ENCODE measurements at regions of chr14 and their contacts with region 1.

Region 1: DNA sequence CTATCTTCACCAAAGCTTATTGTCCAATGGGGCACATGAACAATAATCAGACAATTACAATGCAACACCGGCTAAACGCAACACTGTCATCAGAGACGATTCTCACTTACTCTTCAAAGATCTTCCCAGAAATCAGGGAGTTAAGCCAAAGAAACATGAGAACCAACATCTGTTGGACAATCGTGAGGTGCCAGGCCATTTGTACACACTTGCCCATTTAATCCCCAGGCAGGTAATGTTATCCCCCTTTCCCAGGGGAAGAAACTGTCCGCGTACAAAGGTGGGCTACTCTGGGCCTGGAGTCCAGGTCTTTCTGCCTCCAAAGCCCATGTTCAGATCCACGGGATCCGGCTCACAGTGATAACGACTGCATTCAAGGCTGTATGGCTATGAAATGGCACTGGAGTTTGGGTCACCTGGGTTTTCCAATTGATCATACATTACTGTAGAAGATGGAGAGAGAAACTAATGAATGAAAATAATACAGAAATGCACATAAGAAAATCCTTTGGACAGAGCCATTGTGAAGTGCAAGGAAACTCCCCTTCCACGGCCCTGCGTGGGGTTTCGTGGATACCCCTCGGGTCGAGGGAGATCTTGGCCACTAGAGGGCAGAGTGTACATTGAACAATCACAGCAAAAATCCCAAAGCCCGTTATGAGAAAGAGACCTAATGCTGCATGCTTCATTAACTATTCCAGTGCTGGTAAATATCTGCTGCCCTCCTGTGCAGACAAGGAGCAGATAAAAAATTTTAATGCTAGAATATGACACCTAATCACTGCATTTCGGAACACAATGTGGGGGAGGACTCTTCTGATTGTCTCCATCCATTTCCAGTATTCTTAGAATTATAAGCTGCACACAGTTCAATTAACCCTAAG is 111.4 kb downstream of the EGLN3 start:
- DNase-seq: peak; percentile 55
- ATAC-seq: peak; percentile 66 to 73

Region 2: DNA sequence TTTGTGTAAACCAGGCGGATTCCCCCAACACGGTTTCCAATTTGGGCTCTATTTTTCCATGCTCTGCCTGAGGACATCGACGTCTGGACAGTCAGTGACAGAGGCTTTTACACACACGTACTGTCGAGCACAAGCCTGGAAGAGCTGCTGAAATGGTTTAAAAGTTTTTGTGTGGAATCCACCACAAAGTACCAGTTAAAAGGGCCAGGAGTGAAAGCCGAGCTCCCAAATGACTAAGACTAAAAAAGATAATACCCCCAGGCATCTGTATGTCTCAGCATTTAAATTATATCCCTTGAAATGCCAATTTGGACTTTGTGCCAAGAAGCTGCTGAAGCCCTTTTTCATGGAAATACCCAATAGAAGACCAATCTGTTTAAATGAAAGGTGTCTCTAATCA is 61.8 kb before region 1 on chr14:
- intact Hi-C with region 1: no loop called
- DNase-seq: no peak
- ATAC-seq: no peak

Region 3: DNA sequence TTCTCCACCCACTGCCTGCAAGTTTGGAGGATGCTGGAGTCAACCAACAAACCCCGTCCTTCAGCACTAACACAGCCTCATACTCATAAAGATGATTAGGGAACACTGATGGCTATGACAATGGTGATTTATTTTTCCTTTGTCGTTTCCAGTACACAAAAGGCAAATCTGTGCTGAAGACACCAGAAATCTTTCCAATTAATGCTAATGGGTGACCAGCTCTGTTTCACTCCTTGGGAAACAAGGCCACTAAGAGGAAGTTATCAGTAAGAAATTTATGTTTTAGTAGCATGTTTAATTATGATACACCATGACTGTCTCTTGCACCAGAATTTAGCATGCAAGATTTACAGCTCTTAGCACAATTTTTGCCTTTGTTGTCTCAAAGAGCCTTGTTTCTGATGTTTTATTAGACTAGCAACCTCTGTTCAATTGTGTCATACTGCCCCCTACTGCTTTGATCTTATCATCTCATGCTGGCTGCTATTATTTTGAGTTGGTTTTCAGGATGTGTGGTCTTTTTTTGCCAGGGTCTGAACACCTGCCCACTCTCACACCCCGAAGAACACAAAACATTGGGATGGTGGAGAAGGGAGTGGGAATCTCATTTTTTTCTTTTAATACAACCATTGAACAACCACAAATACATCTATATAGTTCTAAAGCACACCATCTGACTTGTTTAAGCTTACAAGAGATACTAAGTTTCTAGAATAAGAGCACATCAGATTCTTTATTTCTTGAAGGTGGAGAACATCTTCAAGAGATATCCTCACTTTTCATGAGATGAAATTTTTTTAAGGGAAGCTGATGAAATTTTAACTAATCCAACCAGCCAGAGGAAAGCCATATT is 461.7 kb after region 1 on chr14:
- intact Hi-C with region 1: loop called (anchors 2 to 10 kb)
- DNase-seq: no peak
- ATAC-seq: peak in 1 of 2 donors; percentile 37

Region 4: GRCh38 chr14:34322940-34323418 is 483.5 kb after region 1 on chr14:
- intact Hi-C with region 1: loop called in 1 of 2 experiments (anchors 5 kb)
- DNase-seq: peak; percentile 52
- ATAC-seq: peak; percentile 71 to 72

Measured in left cardiac atrium (tissue), 4 donors.